PC-3 (cell line): ENCODE measurements at regions of chr3 and their contacts with region 1.

Region 1: DNA sequence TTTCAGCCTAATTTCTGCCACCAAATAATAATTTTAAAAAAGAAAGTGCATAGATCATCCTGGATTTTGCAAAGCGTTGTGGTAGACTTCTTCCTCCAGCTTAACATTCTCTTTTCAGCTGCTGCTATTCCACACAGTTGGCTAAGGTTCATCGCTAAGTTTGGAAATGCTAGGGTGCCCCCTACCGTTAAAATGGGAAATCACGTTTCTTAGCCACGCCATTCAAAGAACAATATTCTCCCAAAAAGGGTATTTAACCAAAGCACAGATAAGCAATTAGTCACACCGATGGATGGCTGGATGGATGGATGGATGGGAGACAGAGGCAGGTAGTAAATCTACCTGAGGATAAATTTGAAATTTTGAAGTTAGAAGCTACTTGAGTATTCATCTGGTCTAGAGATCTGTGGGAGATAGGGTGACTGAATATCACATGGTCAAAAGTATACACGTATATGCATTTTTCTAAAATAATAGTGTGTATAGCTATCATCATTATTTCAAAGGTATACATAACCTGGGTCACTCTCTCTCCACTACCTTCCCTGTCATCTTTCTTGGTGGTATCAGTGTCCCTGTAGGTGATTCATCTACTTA is 67.2 kb downstream of the EFHB start:
- DNase-seq: peak; percentile 82
- ATAC-seq: peak; percentile 89
- H3K4me3 ChIP-seq: no peak overlapping the region
- H3K27ac ChIP-seq: no peak overlapping the region
- H3K4me1 ChIP-seq: no peaks in the 10 kb centered on the region
- H3K27me3 ChIP-seq: peaks cover 42% of the 10 kb centered on the region
- CTCF ChIP-seq: peak; percentile 95

Region 2: GRCh38 chr3:18847583-18848197 is 1019.2 kb before region 1 on chr3:
- CTCF ChIA-PET with region 1: no interaction called
- POLR2A ChIA-PET with region 1: no interaction called
- intact Hi-C with region 1: loop called (anchors 5 kb)
- DNase-seq: peak; percentile 62
- ATAC-seq: peak; percentile 53; the same call in 1 of the 2 replicates
- H3K4me3 ChIP-seq: no peak overlapping the region
- H3K27ac ChIP-seq: no peak overlapping the region
- H3K4me1 ChIP-seq: no peaks in the 10 kb centered on the region
- H3K27me3 ChIP-seq: no peaks in the 10 kb centered on the region
- CTCF ChIP-seq: peak; percentile 75

Region 3: GRCh38 chr3:19348929-19349564 is 517.8 kb before region 1 on chr3:
- CTCF ChIA-PET with region 1: interaction called, 17 read pairs
- POLR2A ChIA-PET with region 1: no interaction called
- intact Hi-C with region 1: loop called (anchors 1 kb)
- DNase-seq: peak; percentile 60
- ATAC-seq: peak; percentile 57
- H3K4me3 ChIP-seq: no peak overlapping the region
- H3K27ac ChIP-seq: no peak overlapping the region
- H3K4me1 ChIP-seq: no peaks in the 10 kb centered on the region
- H3K27me3 ChIP-seq: peaks cover 3% of the 10 kb centered on the region; the same call in 1 of the 2 replicates
- CTCF ChIP-seq: peak; percentile 60